ENCODE measurements at regions of chr12 and their contacts with region 1.

Region 1: DNA sequence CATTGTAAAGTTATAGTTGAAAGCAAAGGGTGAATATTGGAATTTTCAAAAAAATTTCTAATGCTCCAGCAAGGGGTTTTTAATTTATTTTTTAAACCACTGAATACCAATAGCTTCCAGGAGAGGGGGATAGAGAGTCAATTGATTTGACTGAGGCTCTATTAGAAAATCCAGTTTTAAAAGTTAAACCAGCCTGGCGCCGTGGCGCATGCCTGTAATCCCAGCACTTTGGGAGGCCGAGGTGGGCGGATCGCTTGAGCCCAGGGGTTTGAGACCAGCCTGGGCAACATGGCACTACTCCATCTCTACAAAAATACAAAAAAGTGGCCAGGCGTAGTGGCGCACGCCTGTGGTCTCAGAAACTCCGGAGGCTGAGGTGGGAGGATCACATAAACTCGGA is 150.1 kb downstream of the SLC38A4 start:
- DNase-seq: no peak
- ATAC-seq: peak; percentile 66
- H3K4me3 ChIP-seq: no peak overlapping the region
- H3K27ac ChIP-seq: peak overlapping the region; percentile 13; the same call in 1 of the 2 replicates
- H3K4me1 ChIP-seq: peaks cover 42 to 44% of the 10 kb centered on the region in 2 experiments
- H3K27me3 ChIP-seq: no peaks in the 10 kb centered on the region
- CTCF ChIP-seq: peak; percentile 44 to 61 (median 52); a peak in 5 of 6 replicates
- POLR2A ChIP-seq: no peak
- RAD21 ChIP-seq: peak; percentile 55

Region 2: GRCh38 chr12:46124848-46125619 is 550.7 kb before region 1 on chr12:
- CTCF ChIA-PET with region 1: interaction called, 3 read pairs
- POLR2A ChIA-PET with region 1: no interaction called
- RAD21 ChIA-PET with region 1: interaction called in 1 of 2 experiments, 3 read pairs
- intact Hi-C with region 1: loop called (anchors 10 kb)
- DNase-seq: peak; percentile 80
- ATAC-seq: peak; percentile 97
- H3K4me3 ChIP-seq: peak overlapping the region; percentile 18 to 55
- H3K27ac ChIP-seq: no peak overlapping the region
- H3K4me1 ChIP-seq: peaks cover 0 to 10% of the 10 kb centered on the region in 2 experiments; a peak in 1 of 4 replicates
- H3K27me3 ChIP-seq: no peaks in the 10 kb centered on the region
- CTCF ChIP-seq: peak; percentile 68 to 87 (median 76); a peak in 5 of 6 replicates
- POLR2A ChIP-seq: no peak
- RAD21 ChIP-seq: peak; percentile 77

Region 3: GRCh38 chr12:46342562-46343033 is 333.1 kb before region 1 on chr12:
- CTCF ChIA-PET with region 1: interaction called, 4 read pairs
- POLR2A ChIA-PET with region 1: no interaction called
- RAD21 ChIA-PET with region 1: no interaction called
- intact Hi-C with region 1: loop called (anchors 5 kb)
- DNase-seq: peak; percentile 56
- ATAC-seq: peak; percentile 94
- H3K4me3 ChIP-seq: no peak overlapping the region
- H3K27ac ChIP-seq: no peak overlapping the region
- H3K4me1 ChIP-seq: peaks cover 3 to 11% of the 10 kb centered on the region in 2 experiments; a peak in 3 of 4 replicates
- H3K27me3 ChIP-seq: no peaks in the 10 kb centered on the region
- CTCF ChIP-seq: peak; percentile 61 to 82 (median 78); a peak in 5 of 6 replicates
- POLR2A ChIP-seq: no peak
- RAD21 ChIP-seq: peak; percentile 93

Region 4: GRCh38 chr12:46722394-46723185 is 46.9 kb after region 1 on chr12:
- CTCF ChIA-PET with region 1: no interaction called
- POLR2A ChIA-PET with region 1: no interaction called
- RAD21 ChIA-PET with region 1: no interaction called
- intact Hi-C with region 1: no loop called
- DNase-seq: no peak
- ATAC-seq: no peak
- H3K4me3 ChIP-seq: no peak overlapping the region
- H3K27ac ChIP-seq: no peak overlapping the region
- H3K4me1 ChIP-seq: no peaks in the 10 kb centered on the region
- H3K27me3 ChIP-seq: no peaks in the 10 kb centered on the region
- CTCF ChIP-seq: no peak
- POLR2A ChIP-seq: no peak
- RAD21 ChIP-seq: no peak

Region 5: GRCh38 chr12:46933947-46934346 is 258.2 kb after region 1 on chr12:
- CTCF ChIA-PET with region 1: interaction called, 7 read pairs
- POLR2A ChIA-PET with region 1: no interaction called
- RAD21 ChIA-PET with region 1: no interaction called
- intact Hi-C with region 1: loop called (anchors 5 kb)
- DNase-seq: no peak
- ATAC-seq: peak; percentile 82
- H3K4me3 ChIP-seq: no peak overlapping the region
- H3K27ac ChIP-seq: no peak overlapping the region
- H3K4me1 ChIP-seq: peaks cover 5 to 9% of the 10 kb centered on the region in 2 experiments; a peak in 2 of 4 replicates
- H3K27me3 ChIP-seq: no peaks in the 10 kb centered on the region
- CTCF ChIP-seq: peak; percentile 40 to 62 (median 48); a peak in 5 of 6 replicates
- POLR2A ChIP-seq: no peak
- RAD21 ChIP-seq: peak; percentile 79

Region 6: DNA sequence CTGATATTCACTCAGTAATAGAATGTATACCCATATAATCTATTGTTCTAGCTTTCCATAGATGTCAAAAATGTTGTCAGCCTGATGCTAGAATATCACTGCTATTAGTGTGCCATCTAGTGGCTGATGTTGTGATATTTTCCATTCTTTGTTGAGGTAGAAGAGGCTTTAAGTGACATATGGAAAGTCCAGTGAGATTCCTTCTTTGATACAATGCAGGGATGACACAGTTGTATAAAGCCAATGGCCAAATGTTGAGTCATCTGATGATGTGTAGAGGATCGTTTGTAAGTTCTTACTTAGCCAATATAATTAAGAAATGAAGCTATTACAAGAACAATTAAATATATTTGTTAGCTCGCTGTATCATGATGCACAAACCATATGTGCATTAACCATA is 345.6 kb after region 1 on chr12:
- CTCF ChIA-PET with region 1: interaction called, 9 read pairs
- POLR2A ChIA-PET with region 1: no interaction called
- RAD21 ChIA-PET with region 1: no interaction called
- intact Hi-C with region 1: loop called (anchors 1 kb)
- DNase-seq: peak; percentile 90
- ATAC-seq: peak; percentile 98
- H3K4me3 ChIP-seq: no peak overlapping the region
- H3K27ac ChIP-seq: no peak overlapping the region
- H3K4me1 ChIP-seq: peaks cover 0 to 17% of the 10 kb centered on the region in 2 experiments; a peak in 3 of 4 replicates
- H3K27me3 ChIP-seq: no peaks in the 10 kb centered on the region
- CTCF ChIP-seq: peak; percentile 52 to 81 (median 72); a peak in 5 of 6 replicates
- POLR2A ChIP-seq: no peak
- RAD21 ChIP-seq: peak; percentile 91

Measured in HCT116 (cell line).